CD14-positive monocyte (primary cell): ENCODE measurements at regions of chrX and their contacts with region 1.

Region 1: GRCh38 chrX:136767104-136767941 is 13.4 kb downstream of the ARHGEF6 start:
- DNase-seq: peak; percentile 57 to 69 (median 64)
- H3K4me3 ChIP-seq: peak overlapping the region; percentile 56 to 78 (median 72)
- H3K4me3 Mint-ChIP-seq: peak overlapping the region; percentile 81 to 86
- H3K27ac ChIP-seq: peak overlapping the region; percentile 70 to 75
- H3K27ac Mint-ChIP-seq: peak overlapping the region; percentile 75 to 94 (median 91)
- H3K4me1 ChIP-seq: peaks cover 25 to 32% of the 10 kb centered on the region in 2 donors
- H3K4me1 Mint-ChIP-seq: peaks cover 36% of the 10 kb centered on the region
- H3K27me3 ChIP-seq: no peaks in the 10 kb centered on the region
- H3K27me3 Mint-ChIP-seq: peaks cover 0 to 8% (median 0%) of the 10 kb centered on the region in 3 donors
- CTCF ChIP-seq: peak; percentile 49

Region 2: GRCh38 chrX:136780763-136781162 is 13.4 kb after region 1 on chrX and contains the start of gene ARHGEF6:
- intact Hi-C with region 1: loop called in 1 of 2 experiments (anchors 2 kb)
- DNase-seq: peak in 2 of 3 donors; percentile 14 to 21
- H3K4me3 ChIP-seq: peak within 1 kb of the TSS; percentile 43 to 88 (median 75)
- H3K4me3 Mint-ChIP-seq: peak within 1 kb of the TSS; percentile 78 to 94
- H3K27ac ChIP-seq: peak within 1 kb of the TSS; percentile 50 to 81
- H3K27ac Mint-ChIP-seq: peak within 1 kb of the TSS; percentile 80 to 95 (median 88)
- H3K4me1 ChIP-seq: peaks cover 45 to 59% of the 10 kb centered on the region in 2 donors
- H3K4me1 Mint-ChIP-seq: peaks cover 56% of the 10 kb centered on the region
- H3K27me3 ChIP-seq: no peaks in the 10 kb centered on the region
- H3K27me3 Mint-ChIP-seq: no peaks in the 10 kb centered on the region
- CTCF ChIP-seq: no peak
- polyA plus RNA-seq, gene ARHGEF6: 51.4 to 79.2 (median 57.0) TPM

Region 3: GRCh38 chrX:136856551-136856950 is 89.2 kb after region 1 on chrX:
- intact Hi-C with region 1: loop called in 1 of 2 experiments (anchors 10 kb)
- DNase-seq: peak; percentile 25 to 61 (median 42)
- H3K4me3 ChIP-seq: peak overlapping the region in 2 of 3 experiments; percentile 5 to 56
- H3K4me3 Mint-ChIP-seq: peak overlapping the region; percentile 64 to 74
- H3K27ac ChIP-seq: peak overlapping the region; percentile 38 to 73
- H3K27ac Mint-ChIP-seq: peak overlapping the region; percentile 75 to 91 (median 88)
- H3K4me1 ChIP-seq: peaks cover 10 to 27% of the 10 kb centered on the region in 2 donors
- H3K4me1 Mint-ChIP-seq: peaks cover 30% of the 10 kb centered on the region
- H3K27me3 ChIP-seq: no peaks in the 10 kb centered on the region
- H3K27me3 Mint-ChIP-seq: peaks cover 0 to 1% (median 0%) of the 10 kb centered on the region in 3 donors
- CTCF ChIP-seq: no peak